ENCODE measurements at regions of chr2 and their contacts with region 1.

Region 1: DNA sequence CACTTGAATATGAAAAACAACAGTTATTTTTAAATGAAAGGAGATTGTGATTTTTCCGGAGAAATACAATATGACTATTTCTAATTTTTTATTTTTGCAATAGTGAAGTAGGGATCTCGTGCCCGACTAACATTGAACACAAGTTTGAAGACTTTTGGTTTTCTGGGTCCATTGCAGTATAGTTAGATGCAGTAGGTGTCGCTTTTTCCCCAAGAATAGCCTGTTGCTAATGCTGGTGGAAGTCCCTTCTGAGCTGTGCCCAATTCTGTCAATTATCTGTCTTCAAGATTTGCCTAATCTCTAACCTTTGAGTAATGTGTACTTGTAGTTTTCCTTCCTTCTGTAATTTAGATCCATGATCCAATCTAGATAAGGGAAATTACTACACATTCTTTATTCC is 36.5 kb downstream of the SEMA4F start:
- DNase-seq: peak; percentile 62
- H3K4me3 ChIP-seq: no peak overlapping the region
- H3K27ac ChIP-seq: no peak overlapping the region
- H3K4me1 ChIP-seq: no peaks in the 10 kb centered on the region
- CTCF ChIP-seq: peak; percentile 94

Region 2: DNA sequence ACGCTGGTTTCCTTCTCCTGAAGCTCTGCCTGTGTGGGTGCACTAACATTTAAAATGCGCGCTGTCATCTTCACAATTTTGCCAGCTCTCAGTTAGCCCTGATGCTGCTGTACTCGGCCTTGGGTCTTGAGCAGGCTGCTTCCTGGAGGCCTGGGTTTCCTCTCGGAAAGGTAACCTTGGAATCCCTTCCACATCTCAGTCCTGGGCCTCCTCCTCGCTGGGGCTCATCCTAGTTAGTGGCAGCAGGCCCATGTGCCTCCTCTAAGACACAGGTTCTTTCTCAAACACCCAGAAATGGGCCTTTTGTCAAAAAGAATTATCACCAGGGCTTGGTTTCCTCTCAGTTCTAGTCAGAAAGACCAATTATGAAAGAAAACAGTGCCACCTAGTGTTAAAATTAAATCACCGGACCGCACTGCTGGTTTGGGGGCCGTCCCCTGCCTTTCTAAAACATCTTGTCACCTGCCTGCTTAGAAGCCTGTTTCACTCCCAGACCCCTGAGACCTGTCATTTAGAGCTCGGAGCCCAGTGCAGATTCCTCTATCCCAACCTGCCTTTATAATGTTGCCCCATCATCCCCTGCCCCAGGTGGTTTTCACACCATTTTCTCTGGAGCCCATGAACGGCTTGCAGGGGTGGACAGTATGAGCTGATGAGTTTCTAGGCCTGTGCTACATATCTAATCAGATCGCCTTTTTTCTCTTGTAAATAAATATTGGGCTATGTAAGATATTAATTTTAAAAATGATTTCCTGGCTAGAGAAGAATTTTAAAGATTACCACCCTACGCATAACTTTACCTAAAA is 185.7 kb after region 1 on chr2:
- CTCF ChIA-PET with region 1: interaction called, 3 read pairs
- POLR2A ChIA-PET with region 1: no interaction called
- intact Hi-C with region 1: loop called (anchors 1 kb)
- DNase-seq: peak; percentile 67
- H3K4me3 ChIP-seq: no peak overlapping the region
- H3K27ac ChIP-seq: no peak overlapping the region
- H3K4me1 ChIP-seq: no peaks in the 10 kb centered on the region
- CTCF ChIP-seq: peak; percentile 89